ENCODE measurements at regions of chr5 and their contacts with region 1.

Region 1: DNA sequence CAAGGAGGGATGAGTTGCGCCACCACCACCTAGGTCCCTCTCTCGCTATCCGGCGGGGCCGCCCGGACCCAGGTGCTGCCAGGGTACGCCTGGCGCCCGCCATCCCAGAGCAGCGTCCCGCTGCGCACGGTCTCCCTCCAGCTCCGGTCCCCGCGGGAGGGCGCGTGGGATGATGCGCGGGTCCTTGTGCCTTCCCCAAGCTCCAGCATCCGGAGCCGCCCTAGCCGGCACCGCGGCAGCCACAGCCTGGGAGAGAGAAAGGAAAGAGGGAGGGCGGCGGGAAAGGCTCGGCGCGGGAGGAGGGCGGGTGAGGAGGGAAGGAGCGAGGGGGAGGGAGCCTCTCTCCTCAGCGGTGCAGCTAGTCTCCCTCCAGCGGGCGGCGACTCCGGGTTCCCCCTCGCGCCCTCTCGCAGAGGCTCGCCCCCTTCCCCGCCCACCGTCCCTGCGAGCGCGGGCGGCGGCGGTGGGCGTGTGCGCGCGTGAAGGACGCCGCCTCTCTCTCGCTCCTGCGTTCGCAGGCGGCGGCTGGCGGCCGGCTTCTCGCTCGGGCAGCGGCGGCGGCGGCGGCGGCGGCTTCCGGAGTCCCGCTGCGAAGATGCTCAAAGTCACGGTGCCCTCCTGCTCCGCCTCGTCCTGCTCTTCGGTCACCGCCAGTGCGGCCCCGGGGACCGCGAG is at the start of gene CAMK4:
- DNase-seq: peak; percentile 75
- H3K4me3 Mint-ChIP-seq: peak within 1 kb of the TSS; percentile 90
- H3K27ac Mint-ChIP-seq: peak within 1 kb of the TSS; percentile 85
- H3K4me1 Mint-ChIP-seq: peaks cover 43% of the 10 kb centered on the region
- H3K27me3 Mint-ChIP-seq: peaks cover 1% of the 10 kb centered on the region
- total RNA-seq, gene CAMK4: 59.5 to 66.1 TPM

Region 2: GRCh38 chr5:111158105-111158744 is 65.8 kb before region 1 on chr5:
- CTCF ChIA-PET with region 1: interaction called, 11 read pairs
- POLR2A ChIA-PET with region 1: interaction called, 3 read pairs
- DNase-seq: peak; percentile 77
- H3K4me3 Mint-ChIP-seq: no peak overlapping the region
- H3K27ac Mint-ChIP-seq: no peak overlapping the region
- H3K4me1 Mint-ChIP-seq: peaks cover 2% of the 10 kb centered on the region
- H3K27me3 Mint-ChIP-seq: peaks cover 3% of the 10 kb centered on the region

Region 3: GRCh38 chr5:111234125-111234524 is 10.1 kb after region 1 on chr5:
- CTCF ChIA-PET with region 1: interaction called, 39 read pairs
- POLR2A ChIA-PET with region 1: interaction called, 130 read pairs
- DNase-seq: no peak
- H3K4me3 Mint-ChIP-seq: peak overlapping the region; percentile 36
- H3K27ac Mint-ChIP-seq: peak overlapping the region; percentile 82
- H3K4me1 Mint-ChIP-seq: peaks cover 86% of the 10 kb centered on the region
- H3K27me3 Mint-ChIP-seq: no peaks in the 10 kb centered on the region

Region 4: GRCh38 chr5:111254613-111255012 is 30.6 kb after region 1 on chr5:
- CTCF ChIA-PET with region 1: interaction called, 19 read pairs
- POLR2A ChIA-PET with region 1: interaction called, 29 read pairs
- DNase-seq: peak; percentile 47
- H3K4me3 Mint-ChIP-seq: peak overlapping the region; percentile 18
- H3K27ac Mint-ChIP-seq: peak overlapping the region; percentile 59
- H3K4me1 Mint-ChIP-seq: peaks cover 56% of the 10 kb centered on the region
- H3K27me3 Mint-ChIP-seq: no peaks in the 10 kb centered on the region

Region 5: DNA sequence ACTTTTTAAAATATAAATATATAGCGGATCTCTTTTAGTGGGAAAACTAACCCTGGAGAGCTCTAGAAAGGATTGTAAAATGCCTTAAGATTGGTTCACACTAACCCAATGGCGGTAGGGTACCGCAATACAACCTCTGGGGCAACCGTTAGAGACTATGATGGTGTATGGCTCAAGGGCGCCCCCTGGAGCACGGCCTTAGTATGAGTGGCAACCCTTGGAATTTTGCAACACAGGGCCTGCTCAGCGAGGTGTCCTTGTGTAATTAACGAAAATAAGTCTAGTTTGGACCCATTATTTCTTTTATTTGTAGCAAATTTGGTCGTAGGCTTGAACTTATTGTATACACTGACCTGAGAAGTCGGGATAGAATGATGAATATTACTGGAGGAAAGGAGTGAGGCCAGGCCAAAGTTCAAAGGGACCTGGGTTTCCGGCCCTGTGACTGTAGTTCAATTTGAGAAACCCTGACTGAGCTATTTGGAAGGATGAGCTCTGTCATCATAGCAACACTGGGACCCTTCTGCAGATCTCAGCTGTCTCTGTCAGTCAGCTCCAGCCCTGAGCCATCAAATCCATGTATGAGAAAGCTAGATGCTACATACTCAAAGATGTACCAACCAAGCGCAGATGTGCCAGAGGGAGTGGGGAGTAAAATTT is 54.9 kb after region 1 on chr5:
- CTCF ChIA-PET with region 1: interaction called, 50 read pairs
- POLR2A ChIA-PET with region 1: interaction called, 14 read pairs
- DNase-seq: peak; percentile 87
- H3K4me3 Mint-ChIP-seq: no peak overlapping the region
- H3K27ac Mint-ChIP-seq: no peak overlapping the region
- H3K4me1 Mint-ChIP-seq: peaks cover 10% of the 10 kb centered on the region
- H3K27me3 Mint-ChIP-seq: no peaks in the 10 kb centered on the region

Region 6: GRCh38 chr5:111512375-111513130 is 288.5 kb after region 1 on chr5 and contains the start of gene STARD4:
- CTCF ChIA-PET with region 1: interaction called, 3 read pairs
- POLR2A ChIA-PET with region 1: interaction called, 15 read pairs
- DNase-seq: peak; percentile 96
- H3K4me3 Mint-ChIP-seq: peak within 1 kb of the TSS; percentile 89
- H3K27ac Mint-ChIP-seq: peak within 1 kb of the TSS; percentile 88
- H3K4me1 Mint-ChIP-seq: peaks cover 46% of the 10 kb centered on the region
- H3K27me3 Mint-ChIP-seq: no peaks in the 10 kb centered on the region
- total RNA-seq, gene STARD4: 71.8 to 74.9 TPM

Measured in activated CD4-positive, alpha-beta memory T cell treated with anti-CD3 and anti-CD28 coated beads, Interleukin-2, amount 10 ng/mL, durations not matched to agents 7 days and 5 days (primary cell).